MCF 10A (cell line): ENCODE measurements at regions of chr4 and their contacts with region 1.

Region 1: GRCh38 chr4:143335979-143336780 is 496 bp upstream of the GAB1 start:
- DNase-seq: peak; percentile 91
- H3K4me3 Mint-ChIP-seq: peak overlapping the region; percentile 84
- H3K27ac Mint-ChIP-seq: peak overlapping the region; percentile 66
- H3K4me1 Mint-ChIP-seq: peaks cover 21% of the 10 kb centered on the region
- H3K27me3 Mint-ChIP-seq: no peaks in the 10 kb centered on the region
- CTCF ChIP-seq: no peak

Region 2: DNA sequence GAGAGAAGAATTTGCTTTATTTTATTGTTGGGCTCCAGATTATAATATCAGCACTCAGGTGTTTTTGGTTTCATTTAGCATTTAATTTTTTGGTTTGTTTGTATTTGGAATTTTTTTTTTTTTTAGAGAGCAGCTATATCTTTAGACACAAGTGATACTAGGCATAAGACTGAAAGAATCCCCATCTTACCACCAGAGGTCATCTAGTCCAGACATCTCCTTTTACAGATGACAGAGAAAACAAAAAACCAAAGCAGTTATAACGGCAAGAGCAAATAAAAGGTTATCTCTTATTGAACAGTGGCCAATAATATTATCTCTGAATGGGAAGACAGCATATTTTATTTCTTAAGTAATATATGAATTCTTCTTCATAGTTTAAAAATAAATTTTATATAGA is 128.6 kb before region 1 on chr4:
- CTCF ChIA-PET with region 1: interaction called, 7 read pairs
- POLR2A ChIA-PET with region 1: interaction called, 7 read pairs
- intact Hi-C with region 1: loop called (anchors 2 kb)
- DNase-seq: peak; percentile 40
- H3K4me3 Mint-ChIP-seq: no peak overlapping the region
- H3K27ac Mint-ChIP-seq: no peak overlapping the region
- H3K4me1 Mint-ChIP-seq: no peaks in the 10 kb centered on the region
- H3K27me3 Mint-ChIP-seq: no peaks in the 10 kb centered on the region
- CTCF ChIP-seq: peak; percentile 23

Region 3: DNA sequence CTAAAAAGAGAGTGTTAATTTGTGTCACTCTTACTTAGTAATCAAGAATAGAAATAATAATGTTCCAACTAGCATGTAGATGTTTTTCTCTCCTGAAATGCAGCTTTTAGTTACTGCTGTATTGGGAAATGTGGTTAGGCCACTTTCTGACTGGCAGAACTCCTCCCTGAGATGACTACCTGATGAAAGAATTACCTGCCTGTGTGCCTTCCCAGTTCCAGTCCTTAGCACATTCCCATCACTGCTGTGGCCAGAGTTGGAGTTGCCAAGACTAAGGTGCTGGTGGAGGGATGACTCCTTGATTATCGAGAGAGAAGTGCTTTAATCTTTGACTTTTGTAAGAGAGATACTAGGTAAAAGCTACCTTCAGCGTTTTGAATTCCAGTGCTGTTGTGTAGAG is 10.0 kb after region 1 on chr4:
- CTCF ChIA-PET with region 1: interaction called, 4 read pairs
- POLR2A ChIA-PET with region 1: interaction called, 66 read pairs
- intact Hi-C with region 1: no loop called
- DNase-seq: peak; percentile 82
- H3K4me3 Mint-ChIP-seq: peak overlapping the region; percentile 33
- H3K27ac Mint-ChIP-seq: no peak overlapping the region
- H3K4me1 Mint-ChIP-seq: peaks cover 29% of the 10 kb centered on the region
- H3K27me3 Mint-ChIP-seq: no peaks in the 10 kb centered on the region
- CTCF ChIP-seq: no peak

Region 4: DNA sequence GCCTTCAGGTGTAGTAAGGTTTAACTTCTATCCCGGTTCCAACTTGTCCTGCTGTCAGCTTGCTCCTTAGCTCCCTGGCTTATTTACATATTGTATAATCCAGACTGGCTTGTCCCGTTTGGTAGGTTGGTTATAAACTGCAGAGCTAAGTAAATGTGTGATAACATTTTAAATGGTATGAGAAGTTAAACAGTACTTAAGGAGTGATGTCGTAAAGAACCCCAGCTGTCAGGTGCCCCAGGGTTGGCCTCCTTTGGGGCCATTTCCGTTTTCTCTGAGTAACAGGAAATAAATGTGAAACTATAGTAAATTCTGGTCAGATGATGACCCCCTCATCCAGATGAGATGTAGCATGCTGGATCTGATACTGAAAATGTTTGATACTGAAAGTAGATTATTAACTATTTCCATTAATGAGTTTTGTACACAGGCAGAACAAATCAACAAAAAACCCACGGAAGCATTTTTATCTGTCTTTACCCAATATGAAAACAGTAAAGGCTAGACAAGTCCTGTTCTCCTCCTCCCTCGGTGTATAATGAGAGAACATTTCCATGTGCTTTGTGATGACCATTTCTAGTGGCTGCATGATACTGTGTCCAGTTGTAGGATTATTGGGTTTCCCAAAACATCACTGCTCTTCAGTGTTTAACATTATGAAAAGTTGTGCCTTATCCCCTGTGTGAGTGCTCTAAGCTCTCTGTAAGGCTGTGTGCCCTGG is 22.9 kb after region 1 on chr4:
- CTCF ChIA-PET with region 1: interaction called, 5 read pairs
- POLR2A ChIA-PET with region 1: interaction called, 66 read pairs
- intact Hi-C with region 1: no loop called
- DNase-seq: peak; percentile 52
- H3K4me3 Mint-ChIP-seq: peak overlapping the region; percentile 7
- H3K27ac Mint-ChIP-seq: peak overlapping the region; percentile 58
- H3K4me1 Mint-ChIP-seq: peaks cover 57% of the 10 kb centered on the region
- H3K27me3 Mint-ChIP-seq: no peaks in the 10 kb centered on the region
- CTCF ChIP-seq: no peak

Region 5: DNA sequence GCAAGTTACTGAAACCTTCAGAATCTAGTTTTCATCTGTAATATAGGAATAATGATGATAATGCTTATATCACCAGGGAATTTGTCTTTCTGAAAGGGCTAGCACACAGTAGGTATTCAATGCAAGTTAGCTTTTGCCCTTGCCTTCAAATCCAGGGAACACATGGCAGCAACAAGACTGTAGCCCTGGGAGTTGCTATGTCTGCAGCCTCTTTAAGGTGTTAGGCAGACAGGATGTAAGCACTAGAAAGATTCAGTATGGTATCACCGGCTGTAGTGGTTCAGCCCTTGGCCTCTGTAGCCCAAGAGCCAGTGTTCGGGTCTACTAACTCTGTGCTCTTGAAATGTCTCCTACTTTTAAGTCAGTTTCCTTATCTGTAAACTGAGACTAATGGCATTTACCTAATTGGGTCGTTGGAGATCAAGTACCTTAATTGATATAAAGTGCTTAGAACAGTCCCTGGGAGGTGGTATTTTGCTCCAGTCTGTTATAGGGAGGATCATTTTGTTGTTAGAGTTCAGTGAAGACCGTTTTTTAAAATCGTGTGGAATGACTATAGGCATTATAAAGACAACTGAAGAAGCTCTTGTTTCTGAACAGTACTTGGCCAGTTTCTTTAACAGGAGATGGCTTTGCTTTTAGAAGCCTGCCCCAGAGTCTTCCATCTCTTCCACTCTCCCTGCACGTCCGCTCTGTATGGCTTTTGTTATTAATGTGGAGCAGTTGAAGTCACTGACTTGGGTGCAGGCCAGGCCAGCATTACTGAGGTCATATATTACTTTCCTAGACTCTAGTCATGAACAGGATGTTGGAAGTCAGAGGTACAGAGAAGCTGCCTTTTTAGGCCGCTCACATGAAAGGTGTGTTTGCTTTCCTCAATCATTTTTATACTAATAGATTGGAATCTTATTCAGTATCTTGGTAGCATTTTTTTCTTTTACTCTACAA is 45.3 kb after region 1 on chr4:
- CTCF ChIA-PET with region 1: interaction called, 7 read pairs
- POLR2A ChIA-PET with region 1: interaction called, 11 read pairs
- intact Hi-C with region 1: no loop called
- DNase-seq: peak; percentile 69
- H3K4me3 Mint-ChIP-seq: no peak overlapping the region
- H3K27ac Mint-ChIP-seq: peak overlapping the region; percentile 86
- H3K4me1 Mint-ChIP-seq: peaks cover 19% of the 10 kb centered on the region
- H3K27me3 Mint-ChIP-seq: no peaks in the 10 kb centered on the region
- CTCF ChIP-seq: no peak

Region 6: DNA sequence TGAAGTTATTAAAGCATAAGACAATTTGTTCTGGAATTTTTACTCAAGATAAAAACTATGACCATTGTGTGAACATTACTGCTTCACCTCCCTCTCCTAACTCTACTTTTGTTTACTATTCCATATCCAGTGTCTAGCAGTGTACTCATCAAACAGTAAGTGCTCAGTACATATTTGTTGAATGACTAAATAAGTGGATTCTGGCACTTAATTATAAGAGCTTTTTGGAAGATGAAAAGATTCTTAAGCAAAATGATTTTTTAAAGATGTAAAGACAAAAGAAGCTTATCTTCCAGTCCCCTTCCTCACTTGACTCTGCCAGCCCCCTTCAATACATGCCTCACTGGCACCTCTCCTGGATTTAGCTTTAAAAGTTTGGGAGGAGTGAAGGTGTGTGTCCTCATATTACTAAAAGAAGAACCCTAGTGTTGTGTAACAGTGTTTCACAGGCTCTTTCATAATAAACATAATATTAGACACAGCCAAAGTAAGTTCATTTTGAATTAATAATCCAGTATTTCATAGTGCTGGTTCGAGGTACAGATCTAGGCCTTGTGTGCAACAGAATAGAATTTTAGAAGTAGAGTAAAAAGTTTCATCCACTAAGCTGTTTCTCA is 53.5 kb after region 1 on chr4:
- CTCF ChIA-PET with region 1: interaction called, 7 read pairs
- POLR2A ChIA-PET with region 1: interaction called, 14 read pairs
- intact Hi-C with region 1: no loop called
- DNase-seq: peak; percentile 60
- H3K4me3 Mint-ChIP-seq: peak overlapping the region; percentile 5
- H3K27ac Mint-ChIP-seq: peak overlapping the region; percentile 69
- H3K4me1 Mint-ChIP-seq: peaks cover 25% of the 10 kb centered on the region
- H3K27me3 Mint-ChIP-seq: no peaks in the 10 kb centered on the region
- CTCF ChIP-seq: no peak

Region 7: DNA sequence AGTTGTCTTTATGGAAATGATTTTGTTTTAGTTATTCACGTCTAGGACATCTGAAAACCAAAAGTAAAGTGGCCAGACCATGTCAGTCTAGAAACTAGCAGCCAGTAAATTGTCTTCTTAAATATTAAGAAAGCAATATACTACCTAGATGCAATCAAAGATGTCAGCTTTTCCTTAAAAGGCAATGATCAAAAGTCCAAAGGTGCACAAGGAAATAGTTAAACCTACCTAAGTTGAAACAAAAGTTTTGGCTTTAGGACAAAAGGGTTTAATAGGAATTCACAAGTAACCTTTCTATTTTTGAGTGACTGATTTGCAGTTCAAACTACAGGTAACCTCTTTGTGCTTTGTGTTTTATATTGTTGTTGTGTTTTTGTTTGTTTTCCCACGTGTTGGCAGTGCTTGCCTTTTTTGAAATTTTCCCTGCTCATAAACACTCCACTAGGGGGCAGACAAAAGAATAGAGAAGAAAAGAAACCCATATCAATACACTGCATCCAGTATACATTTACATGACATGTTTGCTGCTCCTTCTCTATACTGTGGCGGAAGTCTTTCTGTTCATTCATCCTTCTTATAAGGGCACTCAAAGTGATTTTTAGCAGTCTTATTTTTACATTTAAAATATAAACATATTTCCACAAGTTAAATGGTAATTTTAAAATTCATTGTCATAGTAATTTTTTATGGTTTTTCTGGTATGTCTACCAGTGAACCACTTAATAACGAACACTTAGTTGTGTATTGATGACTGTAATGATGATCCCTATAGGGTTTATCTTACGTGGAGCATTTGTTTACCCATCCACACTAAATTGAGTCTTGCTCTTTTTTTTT is 63.2 kb after region 1 on chr4:
- CTCF ChIA-PET with region 1: interaction called, 6 read pairs
- POLR2A ChIA-PET with region 1: interaction called, 4 read pairs
- intact Hi-C with region 1: loop called (anchors 5 kb)
- DNase-seq: peak; percentile 49
- H3K4me3 Mint-ChIP-seq: no peak overlapping the region
- H3K27ac Mint-ChIP-seq: no peak overlapping the region
- H3K4me1 Mint-ChIP-seq: peaks cover 10% of the 10 kb centered on the region
- H3K27me3 Mint-ChIP-seq: no peaks in the 10 kb centered on the region
- CTCF ChIP-seq: peak; percentile 56